ENCODE measurements at regions of chr19 and their contacts with region 1.

Region 1: GRCh38 chr19:32405431-32406161 is at the start of gene DPY19L3:
- DNase-seq: peak; percentile 98 to 99
- ATAC-seq: peak; percentile 97 to 98
- H3K4me3 ChIP-seq: peak within 1 kb of the TSS; percentile 84
- H3K27ac ChIP-seq: peak within 1 kb of the TSS; percentile 94 to 97
- H3K4me1 ChIP-seq: peaks cover 24% of the 10 kb centered on the region
- CTCF ChIP-seq: no peak
- EP300 ChIP-seq: no peak
- POLR2A ChIP-seq: peak; percentile 97
- RAD21 ChIP-seq: no peak
- polyA plus RNA-seq, gene DPY19L3: 28.9 and 29.6 TPM in 2 replicates

Region 2: DNA sequence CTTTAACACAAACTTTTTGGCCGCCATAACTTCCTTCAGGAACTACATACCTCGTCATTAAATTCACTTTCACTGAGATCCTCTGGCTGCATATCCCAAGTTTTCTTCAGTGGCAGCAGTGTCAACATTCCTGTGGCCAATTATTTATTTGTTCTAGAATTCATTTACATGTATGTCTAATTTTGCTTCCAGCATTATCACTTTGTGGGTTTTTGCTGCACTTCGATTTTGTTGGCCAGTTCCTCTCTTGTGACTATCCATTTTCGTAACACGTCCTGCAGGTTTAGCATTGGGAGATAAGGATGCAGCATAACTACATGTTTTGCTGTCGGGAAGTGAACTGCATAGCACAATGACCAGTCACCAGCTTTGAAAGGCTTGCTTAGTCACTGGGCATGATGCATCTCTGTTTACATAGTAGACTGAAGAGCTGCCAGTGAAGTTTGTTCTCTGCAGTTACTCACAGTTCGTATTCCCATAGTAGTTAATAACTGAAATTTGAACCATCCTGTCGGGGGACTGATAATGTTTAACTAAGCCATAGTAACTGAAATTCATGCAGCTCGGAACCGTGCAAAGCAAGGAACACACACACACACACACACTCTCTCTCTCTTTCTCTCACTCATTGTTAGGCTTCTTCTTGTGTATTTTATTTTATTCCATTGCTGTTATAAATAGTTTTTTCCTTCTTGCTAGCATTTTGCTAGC is 31.9 kb before region 1 on chr19:
- CTCF ChIA-PET with region 1: no interaction called
- POLR2A ChIA-PET with region 1: interaction called, 36 read pairs
- DNase-seq: peak; percentile 96 to 100
- ATAC-seq: peak; percentile 98 to 99
- H3K4me3 ChIP-seq: peak overlapping the region; percentile 30
- H3K27ac ChIP-seq: peak overlapping the region; percentile 84 to 89
- H3K4me1 ChIP-seq: peaks cover 55% of the 10 kb centered on the region
- CTCF ChIP-seq: no peak
- EP300 ChIP-seq: peak; percentile 82 to 95; a peak in 3 of 5 replicates
- POLR2A ChIP-seq: no peak
- RAD21 ChIP-seq: peak in 1 of 2 experiments; percentile 42; a peak in 2 of 5 replicates

Region 3: GRCh38 chr19:32387701-32388392 is 17.7 kb before region 1 on chr19:
- CTCF ChIA-PET with region 1: interaction called, 8 read pairs
- POLR2A ChIA-PET with region 1: interaction called, 26 read pairs
- DNase-seq: no peak
- ATAC-seq: no peak
- H3K4me3 ChIP-seq: no peak overlapping the region
- H3K27ac ChIP-seq: no peak overlapping the region
- H3K4me1 ChIP-seq: no peaks in the 10 kb centered on the region
- CTCF ChIP-seq: no peak
- EP300 ChIP-seq: no peak
- POLR2A ChIP-seq: no peak
- RAD21 ChIP-seq: no peak

Region 4: DNA sequence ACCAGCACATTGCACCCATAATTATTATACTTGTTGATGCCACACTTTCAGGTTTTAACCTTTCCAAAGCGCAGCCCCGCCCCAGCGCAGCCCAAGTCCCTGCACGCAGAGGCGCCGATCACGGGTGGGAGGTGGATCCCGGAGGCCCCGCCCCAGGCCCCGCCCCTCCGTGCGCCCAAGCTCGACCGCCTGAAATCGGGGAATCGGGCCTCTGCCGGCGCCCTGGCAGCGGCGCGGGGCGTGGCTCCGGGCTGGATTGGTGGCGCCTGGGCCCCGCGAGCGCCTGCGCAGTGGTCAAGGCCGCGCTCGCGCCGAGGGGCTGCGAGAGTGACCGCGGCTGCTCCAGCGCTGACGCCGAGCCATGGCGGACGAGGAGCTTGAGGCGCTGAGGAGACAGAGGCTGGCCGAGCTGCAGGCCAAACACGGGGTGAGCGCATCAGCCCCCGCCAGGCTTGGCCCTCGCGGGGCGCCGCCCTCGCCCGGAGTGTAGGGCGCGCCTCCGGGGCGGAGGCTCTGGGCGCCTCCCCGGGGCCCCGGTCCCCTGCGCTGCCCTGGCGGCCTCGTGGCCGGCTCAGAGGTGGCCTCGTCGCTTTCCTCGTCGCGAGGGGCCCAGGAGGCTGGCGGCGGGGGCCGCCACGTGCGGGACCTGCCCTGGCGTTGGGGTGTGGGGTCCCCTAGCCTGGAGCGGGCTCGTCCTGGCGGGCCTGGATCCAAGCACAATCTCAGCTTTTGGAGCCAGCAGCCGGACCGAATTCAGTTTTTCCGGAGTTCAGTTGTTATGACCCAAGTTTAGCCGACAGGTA is 175.5 kb after region 1 on chr19 and contains the start of gene PDCD5:
- CTCF ChIA-PET with region 1: no interaction called
- POLR2A ChIA-PET with region 1: interaction called, 13 read pairs
- DNase-seq: peak; percentile 98
- ATAC-seq: peak; percentile 86 to 94
- H3K4me3 ChIP-seq: peak within 1 kb of the TSS; percentile 94
- H3K27ac ChIP-seq: peak within 1 kb of the TSS; percentile 91 to 93
- H3K4me1 ChIP-seq: peaks cover 16% of the 10 kb centered on the region
- CTCF ChIP-seq: no peak
- EP300 ChIP-seq: no peak
- POLR2A ChIP-seq: peak; percentile 98
- RAD21 ChIP-seq: no peak
- polyA plus RNA-seq, gene PDCD5: 196 and 445 TPM in 2 replicates

Measured in A549 (cell line).